ENCODE measurements at regions of chr18 and their contacts with region 1.

Region 1: GRCh38 chr18:59885579-59886163 is 14.1 kb upstream of the PMAIP1 start:
- DNase-seq: peak; percentile 38
- H3K4me3 Mint-ChIP-seq: peak overlapping the region; percentile 8
- H3K27ac Mint-ChIP-seq: peak overlapping the region; percentile 72
- H3K4me1 Mint-ChIP-seq: peaks cover 47% of the 10 kb centered on the region
- H3K27me3 Mint-ChIP-seq: no peaks in the 10 kb centered on the region

Region 2: GRCh38 chr18:59846814-59847490 is 38.7 kb before region 1 on chr18:
- intact Hi-C with region 1: loop called (anchors 1 kb)
- DNase-seq: peak; percentile 61
- H3K4me3 Mint-ChIP-seq: no peak overlapping the region
- H3K27ac Mint-ChIP-seq: peak overlapping the region; percentile 89
- H3K4me1 Mint-ChIP-seq: peaks cover 21% of the 10 kb centered on the region
- H3K27me3 Mint-ChIP-seq: peaks cover 3% of the 10 kb centered on the region

Region 3: DNA sequence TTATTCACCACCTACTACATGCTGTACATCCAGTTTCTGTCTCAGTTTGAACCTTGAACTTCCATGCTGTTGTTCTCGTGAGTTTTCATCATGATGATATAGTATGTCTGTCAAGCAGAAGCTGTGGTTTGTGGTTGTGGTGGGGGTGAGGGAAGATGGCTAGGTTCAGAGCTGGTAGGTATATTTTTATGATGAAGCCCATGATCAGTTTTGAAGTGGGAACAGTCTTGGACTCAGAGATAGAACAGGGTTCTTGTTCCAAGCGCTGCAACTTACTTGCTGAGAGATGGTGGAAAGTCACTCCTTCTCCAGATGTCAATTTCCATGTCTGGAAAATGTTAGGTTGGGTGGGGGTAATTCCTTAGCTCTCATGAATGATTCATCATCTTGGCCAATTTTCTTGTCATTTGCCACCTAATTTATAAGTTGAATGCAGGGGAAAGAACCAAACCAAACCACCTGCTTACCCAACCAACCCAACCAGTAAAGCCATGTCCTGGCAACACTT is 35.8 kb after region 1 on chr18:
- intact Hi-C with region 1: loop called (anchors 1 kb)
- DNase-seq: peak; percentile 46
- H3K4me3 Mint-ChIP-seq: peak overlapping the region; percentile 15
- H3K27ac Mint-ChIP-seq: peak overlapping the region; percentile 56
- H3K4me1 Mint-ChIP-seq: peaks cover 54% of the 10 kb centered on the region
- H3K27me3 Mint-ChIP-seq: no peaks in the 10 kb centered on the region

Region 4: DNA sequence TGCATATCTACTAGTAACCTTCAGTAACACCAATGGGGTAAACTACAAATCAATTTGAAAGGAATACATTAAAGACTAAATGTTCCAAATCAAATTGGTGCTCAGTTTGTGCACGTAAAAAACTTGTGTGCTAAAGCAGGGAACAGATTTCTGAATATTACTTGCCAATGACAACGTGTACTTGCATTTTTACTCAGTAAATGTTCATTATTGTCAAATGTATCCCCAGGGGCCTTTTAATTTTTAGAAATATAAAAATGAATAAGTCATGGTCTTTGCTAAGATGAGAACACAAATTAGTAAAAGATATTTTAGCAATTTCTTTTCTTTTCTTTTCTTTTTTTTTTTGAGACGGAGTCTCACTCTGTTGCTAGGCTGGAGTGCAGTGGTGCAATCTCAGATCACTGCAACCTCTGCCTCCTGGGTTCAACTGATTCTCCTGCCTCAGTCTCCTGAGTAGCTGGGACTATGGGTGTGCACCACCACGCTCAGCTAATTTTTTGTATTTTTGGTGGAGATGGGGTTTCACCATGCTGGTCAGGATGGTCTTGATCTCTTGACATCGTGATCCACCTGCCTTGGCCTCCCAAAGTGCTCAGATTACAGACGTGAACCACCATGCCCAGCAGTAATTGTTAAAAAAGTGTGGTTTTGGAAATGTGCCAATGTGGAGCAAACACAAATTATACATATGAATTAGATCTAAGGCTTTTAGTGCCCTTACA is 66.8 kb after region 1 on chr18:
- intact Hi-C with region 1: loop called (anchors 1 kb)
- DNase-seq: no peak
- H3K4me3 Mint-ChIP-seq: no peak overlapping the region
- H3K27ac Mint-ChIP-seq: no peak overlapping the region
- H3K4me1 Mint-ChIP-seq: peaks cover 17% of the 10 kb centered on the region
- H3K27me3 Mint-ChIP-seq: no peaks in the 10 kb centered on the region